ENCODE measurements at regions of chr5 and their contacts with region 1.

Region 1: DNA sequence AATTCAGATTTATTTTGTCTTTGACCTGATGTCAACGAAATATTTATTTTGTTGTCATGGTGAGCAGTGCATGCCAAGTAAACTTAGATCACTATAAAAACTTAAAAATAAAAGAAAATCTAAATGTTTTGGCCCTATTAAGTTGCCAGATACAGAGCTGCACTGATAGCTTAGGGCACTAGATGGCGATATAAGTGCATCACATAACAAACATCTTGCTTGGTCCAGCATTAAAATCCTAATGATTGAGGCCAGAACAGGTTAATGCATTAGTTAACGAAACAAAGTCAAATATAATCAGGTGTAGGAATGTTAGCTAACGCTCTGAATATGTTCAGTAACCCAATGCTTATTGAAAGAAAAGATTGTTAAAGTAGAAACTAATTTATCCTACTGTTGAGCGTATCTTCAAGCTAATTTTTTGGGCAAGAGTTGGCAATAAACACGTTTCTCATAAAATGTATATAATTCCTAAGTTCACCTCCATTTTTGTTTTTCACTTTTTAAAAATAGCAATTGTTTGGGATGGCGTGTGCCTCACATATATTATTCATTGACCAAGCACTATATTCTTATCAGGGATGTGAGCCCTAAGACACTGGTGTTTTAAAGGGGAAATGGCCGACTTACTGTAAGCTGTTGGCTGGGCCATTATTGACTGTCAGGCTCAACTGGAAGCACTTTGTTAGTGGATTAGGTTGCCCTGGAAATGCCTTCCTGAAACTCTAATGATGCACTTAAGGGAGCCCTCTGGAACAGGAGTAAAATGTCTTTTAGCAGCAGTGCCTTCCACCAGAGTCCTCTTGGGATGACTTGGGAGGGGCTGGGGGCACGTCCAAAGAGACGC is 33.3 kb downstream of the KCTD16 start:
- DNase-seq: peak; percentile 32
- ATAC-seq: peak; percentile 72
- H3K4me3 Mint-ChIP-seq: peak overlapping the region; percentile 64
- H3K27ac Mint-ChIP-seq: no peak overlapping the region
- H3K4me1 Mint-ChIP-seq: peaks cover 12% of the 10 kb centered on the region
- H3K27me3 Mint-ChIP-seq: peaks cover 40% of the 10 kb centered on the region
- CTCF ChIP-seq: peak; percentile 71

Region 2: DNA sequence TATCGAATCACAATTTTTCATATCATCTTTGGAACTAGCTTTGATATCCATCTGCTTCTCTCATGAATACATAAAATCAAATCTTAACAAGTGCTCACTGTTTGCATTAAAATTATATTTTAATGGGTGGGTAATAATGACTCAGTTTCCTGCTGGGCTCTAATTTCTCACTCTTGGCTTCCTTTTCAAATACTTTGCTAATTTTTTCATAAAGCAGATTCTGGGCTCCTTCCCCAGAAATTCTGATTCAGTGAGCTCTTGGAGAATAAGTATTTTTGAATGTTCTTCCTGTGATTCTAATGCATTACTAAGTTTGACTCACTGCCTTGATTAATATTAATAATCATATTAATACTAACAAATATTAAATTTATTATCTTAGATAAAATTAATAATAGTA is 82.4 kb before region 1 on chr5:
- CTCF ChIA-PET with region 1: no interaction called
- POLR2A ChIA-PET with region 1: no interaction called
- DNase-seq: no peak
- ATAC-seq: no peak
- H3K4me3 Mint-ChIP-seq: no peak overlapping the region
- H3K27ac Mint-ChIP-seq: no peak overlapping the region
- H3K4me1 Mint-ChIP-seq: peaks cover 16% of the 10 kb centered on the region
- H3K27me3 Mint-ChIP-seq: no peaks in the 10 kb centered on the region
- CTCF ChIP-seq: no peak

Region 3: DNA sequence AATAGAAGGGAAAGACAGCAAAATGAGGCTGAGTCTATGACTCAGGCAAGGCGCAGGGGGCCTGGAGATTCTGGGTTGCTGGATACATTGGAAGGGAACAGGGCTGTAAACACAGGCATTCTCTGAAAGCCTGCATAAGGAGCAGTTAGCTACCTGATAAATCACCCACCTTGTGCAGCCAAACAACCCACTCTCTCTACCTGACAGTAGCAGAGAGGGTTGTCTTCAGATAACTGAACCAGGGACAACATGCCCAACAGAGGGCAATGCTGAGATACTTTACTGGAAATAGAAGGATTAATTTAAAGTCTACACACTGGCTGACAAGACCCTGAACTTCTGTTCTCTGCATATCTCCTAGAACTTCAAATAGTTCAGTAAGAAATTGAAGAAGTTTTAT is 128.3 kb after region 1 on chr5:
- CTCF ChIA-PET with region 1: interaction called, 10 read pairs
- POLR2A ChIA-PET with region 1: no interaction called
- DNase-seq: peak; percentile 17
- ATAC-seq: peak; percentile 95
- H3K4me3 Mint-ChIP-seq: no peak overlapping the region
- H3K27ac Mint-ChIP-seq: no peak overlapping the region
- H3K4me1 Mint-ChIP-seq: no peaks in the 10 kb centered on the region
- H3K27me3 Mint-ChIP-seq: peaks cover 17% of the 10 kb centered on the region; the same call in 1 of the 2 replicates
- CTCF ChIP-seq: no peak

Region 4: GRCh38 chr5:144390133-144390532 is 186.2 kb after region 1 on chr5:
- CTCF ChIA-PET with region 1: interaction called, 13 read pairs
- POLR2A ChIA-PET with region 1: no interaction called
- DNase-seq: peak; percentile 16
- ATAC-seq: peak; percentile 67
- H3K4me3 Mint-ChIP-seq: no peak overlapping the region
- H3K27ac Mint-ChIP-seq: no peak overlapping the region
- H3K4me1 Mint-ChIP-seq: 0 out of 2 replicates have a peak, but pooled peaks cover 3% of the 10 kb centered on the region
- H3K27me3 Mint-ChIP-seq: peaks cover 28% of the 10 kb centered on the region
- CTCF ChIP-seq: no peak

Region 5: GRCh38 chr5:144467792-144468191 is 263.8 kb after region 1 on chr5:
- CTCF ChIA-PET with region 1: interaction called, 17 read pairs
- POLR2A ChIA-PET with region 1: no interaction called
- DNase-seq: peak; percentile 52
- ATAC-seq: peak; percentile 98
- H3K4me3 Mint-ChIP-seq: no peak overlapping the region
- H3K27ac Mint-ChIP-seq: peak overlapping the region; percentile 47
- H3K4me1 Mint-ChIP-seq: peaks cover 10% of the 10 kb centered on the region
- H3K27me3 Mint-ChIP-seq: no peaks in the 10 kb centered on the region
- CTCF ChIP-seq: 0 out of 2 replicates have a peak, but pooled peaks have one; percentile 7

Region 6: DNA sequence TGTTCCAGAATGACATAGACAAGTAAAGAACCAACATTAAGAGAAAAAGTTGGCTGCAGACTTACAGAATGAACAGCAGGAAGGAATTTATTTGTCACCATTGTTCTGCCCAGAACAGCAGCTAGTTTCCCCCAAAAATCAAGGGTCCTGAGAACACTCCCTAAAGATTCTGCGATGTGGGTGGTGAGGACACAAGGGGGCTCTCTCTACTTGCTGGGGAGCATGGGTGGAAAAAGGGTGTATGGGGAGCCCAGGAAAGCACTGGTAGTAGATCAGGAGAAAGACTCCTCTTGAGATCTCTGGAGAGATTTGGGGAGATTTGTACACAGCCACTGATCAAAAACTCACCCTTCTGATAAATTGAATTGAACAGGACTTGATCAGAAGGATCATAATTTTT is 283.2 kb after region 1 on chr5:
- CTCF ChIA-PET with region 1: interaction called, 23 read pairs
- POLR2A ChIA-PET with region 1: no interaction called
- DNase-seq: peak; percentile 46
- ATAC-seq: peak; percentile 91
- H3K4me3 Mint-ChIP-seq: peak overlapping the region; percentile 41
- H3K27ac Mint-ChIP-seq: no peak overlapping the region
- H3K4me1 Mint-ChIP-seq: peaks cover 38% of the 10 kb centered on the region
- H3K27me3 Mint-ChIP-seq: peaks cover 42% of the 10 kb centered on the region
- CTCF ChIP-seq: no peak

Region 7: GRCh38 chr5:145237843-145238242 is 1033.9 kb after region 1 on chr5:
- CTCF ChIA-PET with region 1: interaction called, 18 read pairs
- POLR2A ChIA-PET with region 1: no interaction called
- DNase-seq: peak; percentile 73
- ATAC-seq: peak; percentile 97
- H3K4me3 Mint-ChIP-seq: no peak overlapping the region
- H3K27ac Mint-ChIP-seq: no peak overlapping the region
- H3K4me1 Mint-ChIP-seq: peaks cover 37% of the 10 kb centered on the region
- H3K27me3 Mint-ChIP-seq: no peaks in the 10 kb centered on the region
- CTCF ChIP-seq: peak; percentile 73